ENCODE measurements at regions of chr12 and their contacts with region 1.

Region 1: GRCh38 chr12:125183187-125184067 is 118.2 kb downstream of the AACS start:
- DNase-seq: peak; percentile 51 to 70 (median 62)
- H3K4me3 ChIP-seq: no peak overlapping the region
- H3K4me3 Mint-ChIP-seq: peak overlapping the region in 2 of 8 donors; percentile 34 to 64
- H3K27ac ChIP-seq: no peak overlapping the region
- H3K27ac Mint-ChIP-seq: no peak overlapping the region
- H3K4me1 ChIP-seq: peaks cover 11% of the 10 kb centered on the region
- H3K4me1 Mint-ChIP-seq: peaks cover 3 to 19% (median 9%) of the 10 kb centered on the region in 4 donors
- H3K27me3 ChIP-seq: peaks cover 27% of the 10 kb centered on the region
- H3K27me3 Mint-ChIP-seq: peaks cover 42 to 53% of the 10 kb centered on the region in 2 donors

Region 2: DNA sequence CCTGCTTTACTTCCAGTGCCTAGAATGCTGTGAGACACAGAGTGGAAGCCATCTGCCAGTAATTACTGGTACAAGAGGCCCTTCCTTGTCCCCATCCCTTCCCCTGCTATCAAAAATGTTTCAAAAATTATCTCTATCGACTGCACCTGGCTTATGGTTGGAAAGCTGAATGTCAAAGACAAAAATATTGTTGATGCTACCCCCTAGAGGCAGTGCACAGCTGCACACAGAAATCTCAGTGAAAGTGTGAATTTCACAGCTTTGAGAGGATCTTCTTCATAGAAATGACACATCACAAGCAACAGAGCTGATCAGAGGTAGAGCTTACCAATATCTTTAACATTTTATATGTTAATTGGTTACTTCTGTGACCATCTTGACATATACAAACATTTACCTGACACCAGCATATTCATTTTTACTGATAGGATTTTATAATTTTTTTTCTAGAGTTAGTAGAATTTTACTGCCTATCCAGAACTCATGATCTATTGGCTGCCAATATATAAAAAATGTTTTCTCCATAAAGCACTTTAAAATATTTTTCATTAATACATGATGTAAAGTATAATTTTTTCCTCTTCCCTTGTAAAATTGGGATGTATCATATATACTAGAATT is 19.8 kb after region 1 on chr12:
- CTCF ChIA-PET with region 1: interaction called, 13 read pairs
- POLR2A ChIA-PET with region 1: no interaction called
- intact Hi-C with region 1: no loop called
- DNase-seq: no peak
- H3K4me3 ChIP-seq: no peak overlapping the region
- H3K4me3 Mint-ChIP-seq: no peak overlapping the region
- H3K27ac ChIP-seq: no peak overlapping the region
- H3K27ac Mint-ChIP-seq: no peak overlapping the region
- H3K4me1 ChIP-seq: no peaks in the 10 kb centered on the region
- H3K4me1 Mint-ChIP-seq: no peaks in the 10 kb centered on the region
- H3K27me3 ChIP-seq: no peaks in the 10 kb centered on the region
- H3K27me3 Mint-ChIP-seq: peaks cover 16 to 17% of the 10 kb centered on the region in 2 donors

Region 3: GRCh38 chr12:125402874-125403789 is 219.7 kb after region 1 on chr12:
- CTCF ChIA-PET with region 1: interaction called, 8 read pairs
- POLR2A ChIA-PET with region 1: no interaction called
- intact Hi-C with region 1: loop called (anchors 2 kb)
- DNase-seq: no peak
- H3K4me3 ChIP-seq: no peak overlapping the region
- H3K4me3 Mint-ChIP-seq: peak overlapping the region in 1 of 8 donors; percentile 52
- H3K27ac ChIP-seq: no peak overlapping the region
- H3K27ac Mint-ChIP-seq: no peak overlapping the region
- H3K4me1 ChIP-seq: no peaks in the 10 kb centered on the region
- H3K4me1 Mint-ChIP-seq: no peaks in the 10 kb centered on the region
- H3K27me3 ChIP-seq: no peaks in the 10 kb centered on the region
- H3K27me3 Mint-ChIP-seq: peaks cover 7% of the 10 kb centered on the region in 2 donors